ENCODE measurements at regions of chr15 and their contacts with region 1.

Region 1: GRCh38 chr15:91032919-91033803 is 10.8 kb upstream of the VPS33B start:
- DNase-seq: peak in 1 of 2 experiments; percentile 73
- ATAC-seq: peak; percentile 76 to 88; a peak in 5 of 6 replicates
- H3K4me3 ChIP-seq: no peak overlapping the region
- H3K27ac ChIP-seq: no peak overlapping the region
- H3K4me1 ChIP-seq: no peaks in the 10 kb centered on the region
- CTCF ChIP-seq: peak; percentile 62
- EP300 ChIP-seq: no peak
- POLR2A ChIP-seq: no peak
- RAD21 ChIP-seq: peak; percentile 52 to 60

Region 2: GRCh38 chr15:90982135-90982534 is 51.0 kb before region 1 on chr15:
- CTCF ChIA-PET with region 1: interaction called, 11 read pairs
- POLR2A ChIA-PET with region 1: no interaction called
- DNase-seq: no peak
- ATAC-seq: no peak
- H3K4me3 ChIP-seq: no peak overlapping the region
- H3K27ac ChIP-seq: no peak overlapping the region
- H3K4me1 ChIP-seq: peaks cover 12% of the 10 kb centered on the region
- CTCF ChIP-seq: no peak
- EP300 ChIP-seq: no peak
- POLR2A ChIP-seq: no peak
- RAD21 ChIP-seq: no peak

Region 3: DNA sequence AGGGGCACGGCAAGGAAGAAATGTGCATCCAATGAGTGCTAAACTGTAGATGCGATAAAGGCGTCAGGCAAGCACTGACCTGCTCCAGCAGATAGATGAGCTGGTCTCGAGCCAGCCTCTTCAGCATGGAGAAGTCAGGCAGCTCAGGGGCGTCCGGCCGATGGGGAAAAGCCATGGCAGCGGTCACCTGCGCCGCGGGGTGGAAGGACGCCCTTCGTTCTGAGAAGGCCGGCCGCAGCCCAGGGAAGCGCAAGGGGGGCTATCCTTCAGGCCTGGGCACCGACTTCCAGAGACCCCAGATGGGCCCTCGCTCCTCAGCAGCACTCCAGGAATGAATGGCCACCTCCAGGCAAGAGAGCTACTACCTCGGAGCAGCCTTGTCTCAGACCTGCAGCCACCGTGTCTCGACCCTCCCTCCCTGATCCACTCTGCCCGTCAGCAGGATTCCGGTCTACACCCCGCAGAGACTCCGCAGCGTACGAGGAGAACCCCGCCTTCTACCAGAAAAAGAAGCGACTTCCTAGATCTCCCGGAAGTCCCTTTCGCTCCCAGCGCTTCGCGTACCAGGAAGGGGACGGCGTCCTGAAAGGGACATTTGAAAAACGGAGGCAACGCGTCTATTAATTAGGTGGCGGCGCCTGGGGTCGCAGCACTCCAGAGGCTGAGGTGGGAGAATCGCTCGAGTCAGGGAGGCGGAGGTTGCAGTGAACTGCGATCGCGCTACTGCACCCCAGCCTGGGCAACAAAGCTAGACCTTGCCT is 10.9 kb before region 1 on chr15 and contains the start of gene VPS33B:
- CTCF ChIA-PET with region 1: interaction called, 26 read pairs
- POLR2A ChIA-PET with region 1: interaction called, 7 read pairs
- DNase-seq: peak; percentile 86 to 91
- ATAC-seq: peak; percentile 94 to 96
- H3K4me3 ChIP-seq: peak within 1 kb of the TSS; percentile 89
- H3K27ac ChIP-seq: peak within 1 kb of the TSS; percentile 88 to 91
- H3K4me1 ChIP-seq: peaks cover 16% of the 10 kb centered on the region
- CTCF ChIP-seq: no peak
- EP300 ChIP-seq: no peak
- POLR2A ChIP-seq: peak; percentile 84
- RAD21 ChIP-seq: no peak
- polyA plus RNA-seq, gene VPS33B: 17.9 and 25.0 TPM in 2 replicates

Region 4: GRCh38 chr15:91135201-91136130 is 102.3 kb after region 1 on chr15:
- CTCF ChIA-PET with region 1: no interaction called
- POLR2A ChIA-PET with region 1: no interaction called
- DNase-seq: no peak
- ATAC-seq: no peak
- H3K4me3 ChIP-seq: no peak overlapping the region
- H3K27ac ChIP-seq: no peak overlapping the region
- H3K4me1 ChIP-seq: no peaks in the 10 kb centered on the region
- CTCF ChIP-seq: no peak
- EP300 ChIP-seq: no peak
- POLR2A ChIP-seq: no peak
- RAD21 ChIP-seq: no peak

Measured in A549 (cell line).